HCT116 (cell line): ENCODE measurements at regions of chr13 and their contacts with region 1.

Region 1: GRCh38 chr13:53151336-53152056 is 122.9 kb downstream of the OLFM4 start:
- DNase-seq: peak; percentile 15
- ATAC-seq: no peak; the same call in 1 of the 2 replicates
- H3K4me3 ChIP-seq: no peak overlapping the region
- H3K27ac ChIP-seq: no peak overlapping the region
- H3K4me1 ChIP-seq: no peaks in the 10 kb centered on the region
- H3K27me3 ChIP-seq: no peaks in the 10 kb centered on the region
- CTCF ChIP-seq: peak; percentile 8 to 83 (median 73); a peak in 5 of 6 replicates
- POLR2A ChIP-seq: no peak
- RAD21 ChIP-seq: peak; percentile 41

Region 2: GRCh38 chr13:52665325-52665724 is 486.2 kb before region 1 on chr13:
- CTCF ChIA-PET with region 1: interaction called, 11 read pairs
- POLR2A ChIA-PET with region 1: no interaction called
- RAD21 ChIA-PET with region 1: no interaction called
- intact Hi-C with region 1: no loop called
- DNase-seq: peak; percentile 16
- ATAC-seq: no peak
- H3K4me3 ChIP-seq: no peak overlapping the region
- H3K27ac ChIP-seq: no peak overlapping the region
- H3K4me1 ChIP-seq: no peaks in the 10 kb centered on the region
- H3K27me3 ChIP-seq: no peaks in the 10 kb centered on the region
- CTCF ChIP-seq: peak; percentile 20 to 61 (median 54); a peak in 4 of 6 replicates
- POLR2A ChIP-seq: no peak
- RAD21 ChIP-seq: no peak

Region 3: DNA sequence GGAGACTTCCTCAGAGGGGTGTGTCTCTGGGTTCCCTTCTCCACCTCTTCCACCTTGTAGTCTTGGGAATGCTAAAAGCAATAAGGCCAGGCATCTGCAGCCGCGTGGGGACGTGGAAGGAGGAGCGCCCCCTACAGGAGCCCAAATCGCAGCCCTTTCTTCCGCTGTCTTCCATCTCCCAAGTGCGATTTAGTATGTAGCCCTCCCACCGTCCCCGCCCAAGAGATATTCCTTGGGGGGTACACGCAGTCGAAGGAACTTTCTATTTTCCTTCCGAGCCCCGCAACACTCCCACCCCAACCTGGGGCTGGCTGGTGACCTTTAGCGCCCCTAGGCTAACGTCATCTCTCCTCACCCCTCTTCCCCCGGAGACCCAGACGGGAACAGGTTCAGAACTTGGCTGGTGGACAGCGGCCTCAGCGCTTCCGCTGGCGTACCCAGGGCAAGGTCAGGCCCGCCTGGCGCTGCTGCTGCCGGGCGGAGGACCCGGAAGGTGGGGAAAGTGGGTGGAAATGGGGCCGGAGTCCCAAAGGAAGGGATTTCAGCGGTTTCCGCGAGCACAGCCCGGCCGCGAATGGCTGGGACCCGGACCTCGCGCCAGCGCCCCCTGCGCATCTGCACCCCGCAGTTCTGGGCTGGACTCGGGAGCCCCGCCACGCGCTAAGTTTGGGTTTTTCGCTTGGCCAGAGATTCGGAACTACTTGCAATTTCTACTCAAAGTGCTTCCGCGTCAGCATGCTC is 300.9 kb before region 1 on chr13:
- CTCF ChIA-PET with region 1: no interaction called
- POLR2A ChIA-PET with region 1: no interaction called
- RAD21 ChIA-PET with region 1: no interaction called
- intact Hi-C with region 1: loop called (anchors 5 kb)
- DNase-seq: no peak
- ATAC-seq: peak; percentile 73
- H3K4me3 ChIP-seq: no peak overlapping the region
- H3K27ac ChIP-seq: no peak overlapping the region
- H3K4me1 ChIP-seq: no peaks in the 10 kb centered on the region
- H3K27me3 ChIP-seq: peaks cover 13% of the 10 kb centered on the region; the same call in 1 of the 2 replicates
- CTCF ChIP-seq: peak; percentile 13 to 72 (median 68); a peak in 4 of 6 replicates
- POLR2A ChIP-seq: no peak
- RAD21 ChIP-seq: peak; percentile 18